Esophagus muscularis mucosa (tissue), 4 donors: ENCODE measurements at regions of chr19 and their contacts with region 1.

Region 1: DNA sequence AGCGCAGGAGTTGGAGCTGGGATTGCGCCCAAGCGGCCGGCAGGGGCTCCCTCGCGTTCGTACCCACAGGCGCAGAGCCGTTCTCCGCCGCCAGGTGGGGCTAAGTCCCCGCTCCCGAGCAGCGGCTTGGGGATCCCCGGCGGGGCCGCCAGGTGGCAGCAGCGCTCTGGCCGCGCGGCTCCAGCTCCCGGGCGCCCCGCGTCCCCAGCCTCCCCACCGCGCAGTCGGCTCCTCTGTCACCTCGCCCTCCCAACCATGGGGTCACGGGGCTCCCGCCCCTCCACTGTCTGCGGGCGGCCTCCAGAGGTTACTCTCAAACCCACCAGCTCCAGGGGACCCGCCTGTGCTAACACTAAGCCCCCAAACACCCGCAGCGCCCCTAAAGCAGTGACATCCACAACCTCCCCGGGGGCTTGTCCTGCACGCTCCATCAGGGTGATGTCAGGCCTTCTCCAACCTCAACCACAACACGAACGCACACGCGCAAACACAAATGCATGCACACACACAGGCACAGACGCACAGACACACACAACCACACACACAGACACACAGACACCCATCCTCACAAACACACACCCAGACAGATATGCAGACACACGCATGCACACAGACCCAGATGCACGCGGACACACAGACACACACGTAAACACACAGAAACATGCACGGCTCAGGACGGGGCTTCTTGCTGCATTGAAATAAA is 18.4 kb upstream of the KCTD15 start:
- DNase-seq: no peak
- H3K4me3 ChIP-seq: peak overlapping the region in 2 of 4 donors; percentile 17 to 35
- H3K27ac ChIP-seq: no peak overlapping the region
- H3K4me1 ChIP-seq: peaks cover 0 to 23% (median 9%) of the 10 kb centered on the region in 4 donors
- H3K27me3 ChIP-seq: peaks cover 0 to 70% (median 6%) of the 10 kb centered on the region in 4 donors
- CTCF ChIP-seq: peak in 2 of 3 experiments; percentile 100
- EP300 ChIP-seq: no peak
- POLR2A ChIP-seq: no peak

Region 2: GRCh38 chr19:33235269-33235995 is 542.8 kb before region 1 on chr19:
- intact Hi-C with region 1: loop called (anchors 10 kb)
- DNase-seq: peak; percentile 96
- H3K4me3 ChIP-seq: no peak overlapping the region
- H3K27ac ChIP-seq: no peak overlapping the region
- H3K4me1 ChIP-seq: peaks cover 0 to 7% (median 2%) of the 10 kb centered on the region in 4 donors
- H3K27me3 ChIP-seq: peaks cover 0 to 43% (median 2%) of the 10 kb centered on the region in 4 donors
- CTCF ChIP-seq: peak; percentile 83 to 94 (median 85)
- EP300 ChIP-seq: no peak
- POLR2A ChIP-seq: no peak

Region 3: GRCh38 chr19:33998739-33999345 is 220.6 kb after region 1 on chr19:
- intact Hi-C with region 1: loop called (anchors 2 kb)
- DNase-seq: no peak
- H3K4me3 ChIP-seq: no peak overlapping the region
- H3K27ac ChIP-seq: no peak overlapping the region
- H3K4me1 ChIP-seq: no peaks in the 10 kb centered on the region
- H3K27me3 ChIP-seq: peaks cover 0 to 20% (median 0%) of the 10 kb centered on the region in 4 donors
- CTCF ChIP-seq: peak; percentile 22 to 44 (median 37)
- EP300 ChIP-seq: no peak
- POLR2A ChIP-seq: no peak

Region 4: DNA sequence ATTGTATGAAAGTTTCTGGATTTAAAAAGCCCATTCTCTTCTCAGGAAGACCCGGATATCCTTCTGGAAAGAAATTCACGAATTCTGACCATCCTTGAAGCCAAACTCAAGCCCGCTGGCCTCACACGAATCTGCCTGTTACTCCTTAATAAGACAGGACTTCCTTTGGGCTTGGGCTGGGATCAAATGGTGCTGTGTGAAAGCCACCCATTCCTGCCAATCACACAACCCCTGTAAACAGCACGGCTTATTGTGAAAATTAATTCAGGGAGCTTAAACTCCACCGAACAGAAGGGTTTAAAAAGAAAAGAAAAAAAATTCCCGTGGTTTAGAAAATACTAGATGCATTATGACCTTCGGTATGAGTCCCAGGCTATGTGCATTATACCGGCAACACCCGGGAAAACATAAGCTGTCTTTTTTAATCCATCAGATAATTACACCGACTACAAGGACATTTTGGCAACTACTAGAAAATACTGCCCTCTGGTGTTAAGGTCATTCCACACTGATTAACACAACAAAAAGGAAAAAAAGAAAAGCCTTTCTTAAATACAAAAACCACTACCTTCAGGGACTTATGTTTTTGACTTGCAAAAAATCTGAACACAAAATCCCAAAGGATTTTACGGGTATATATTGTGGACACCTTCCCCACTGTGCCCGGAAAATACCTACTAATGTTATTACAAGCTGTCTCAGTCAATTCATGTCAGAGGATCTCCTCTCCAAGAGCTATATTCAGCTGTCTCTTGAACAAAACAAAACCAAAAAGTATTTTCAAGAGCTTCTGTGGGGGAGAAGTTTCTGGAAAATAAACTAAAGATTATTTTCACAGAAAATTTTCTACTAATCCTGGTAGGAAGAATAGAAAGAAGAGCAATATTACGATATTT is 318.0 kb after region 1 on chr19:
- intact Hi-C with region 1: loop called (anchors 1 kb)
- DNase-seq: no peak
- H3K4me3 ChIP-seq: no peak overlapping the region
- H3K27ac ChIP-seq: no peak overlapping the region
- H3K4me1 ChIP-seq: peaks cover 0 to 6% (median 0%) of the 10 kb centered on the region in 4 donors
- H3K27me3 ChIP-seq: peaks cover 0 to 18% (median 0%) of the 10 kb centered on the region in 4 donors
- CTCF ChIP-seq: peak; percentile 59 to 67 (median 64)
- EP300 ChIP-seq: no peak
- POLR2A ChIP-seq: no peak

Region 5: GRCh38 chr19:34145741-34146202 is 367.5 kb after region 1 on chr19:
- intact Hi-C with region 1: loop called (anchors 2 kb)
- DNase-seq: no peak
- H3K4me3 ChIP-seq: no peak overlapping the region
- H3K27ac ChIP-seq: no peak overlapping the region
- H3K4me1 ChIP-seq: no peaks in the 10 kb centered on the region
- H3K27me3 ChIP-seq: no peaks in the 10 kb centered on the region
- CTCF ChIP-seq: peak; percentile 70 to 90 (median 80)
- EP300 ChIP-seq: no peak
- POLR2A ChIP-seq: no peak